Endothelial cell of umbilical vein (primary cell): ENCODE measurements at regions of chr2 and their contacts with region 1.

Region 1: DNA sequence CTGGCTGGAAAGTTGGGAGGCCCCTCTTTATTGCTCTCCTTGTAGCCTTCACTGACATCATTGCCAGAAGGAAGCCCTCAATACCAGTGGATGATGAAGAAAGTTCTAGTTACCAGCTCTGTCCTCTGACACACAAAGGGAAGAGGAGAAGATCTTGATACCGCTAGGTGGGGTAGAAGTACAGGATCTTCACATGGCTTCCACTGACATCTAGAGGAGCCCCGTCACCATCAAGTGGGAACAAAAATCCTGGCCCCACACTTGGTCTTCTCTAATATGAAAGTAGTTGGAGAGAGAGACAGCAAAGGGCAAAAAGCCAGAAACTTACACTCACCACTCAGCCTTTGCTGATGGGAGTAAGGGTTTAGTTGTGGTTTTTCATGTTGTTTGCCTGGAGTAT is 12.4 kb downstream of the XIRP2 start:
- DNase-seq: no peak
- H3K4me3 ChIP-seq: no peak overlapping the region
- H3K27ac ChIP-seq: no peak overlapping the region
- H3K4me1 ChIP-seq: no peaks in the 10 kb centered on the region
- H3K27me3 ChIP-seq: no peaks in the 10 kb centered on the region
- CTCF ChIP-seq: no peak
- POLR2A ChIP-seq: no peak

Region 2: GRCh38 chr2:166960702-166961270 is 60.1 kb after region 1 on chr2:
- CTCF ChIA-PET with region 1: no interaction called
- POLR2A ChIA-PET with region 1: no interaction called
- dilution Hi-C with region 1: no loop called
- intact Hi-C with region 1: loop called (anchors 2 kb)
- DNase-seq: no peak
- H3K4me3 ChIP-seq: no peak overlapping the region
- H3K27ac ChIP-seq: no peak overlapping the region
- H3K4me1 ChIP-seq: no peaks in the 10 kb centered on the region
- H3K27me3 ChIP-seq: no peaks in the 10 kb centered on the region
- CTCF ChIP-seq: no peak
- POLR2A ChIP-seq: no peak

Region 3: GRCh38 chr2:167212014-167212648 is 311.4 kb after region 1 on chr2:
- CTCF ChIA-PET with region 1: no interaction called
- POLR2A ChIA-PET with region 1: no interaction called
- dilution Hi-C with region 1: no loop called
- intact Hi-C with region 1: loop called (anchors 1 kb)
- DNase-seq: peak; percentile 55
- H3K4me3 ChIP-seq: no peak overlapping the region
- H3K27ac ChIP-seq: no peak overlapping the region
- H3K4me1 ChIP-seq: no peaks in the 10 kb centered on the region
- H3K27me3 ChIP-seq: no peaks in the 10 kb centered on the region
- CTCF ChIP-seq: peak; percentile 17 to 55
- POLR2A ChIP-seq: no peak